Colonic mucosa (tissue), 4 donors: ENCODE measurements at regions of chr9 and their contacts with region 1.

Region 1: GRCh38 chr9:4366591-4367330 is 66.9 kb upstream of the GLIS3 start:
- DNase-seq: peak; percentile 26
- H3K4me3 ChIP-seq: no peak overlapping the region
- H3K27ac ChIP-seq: no peak overlapping the region
- H3K4me1 ChIP-seq: no peaks in the 10 kb centered on the region
- H3K27me3 ChIP-seq: no peaks in the 10 kb centered on the region
- CTCF ChIP-seq: peak; percentile 50

Region 2: GRCh38 chr9:4293293-4293931 is 73.3 kb before region 1 on chr9:
- intact Hi-C with region 1: no loop called
- DNase-seq: no peak
- H3K4me3 ChIP-seq: no peak overlapping the region
- H3K27ac ChIP-seq: no peak overlapping the region
- H3K4me1 ChIP-seq: peaks cover 8% of the 10 kb centered on the region
- H3K27me3 ChIP-seq: no peaks in the 10 kb centered on the region
- CTCF ChIP-seq: no peak

Region 3: GRCh38 chr9:4315582-4316215 is 51.1 kb before region 1 on chr9:
- intact Hi-C with region 1: loop called (anchors 5 kb)
- DNase-seq: peak; percentile 79
- H3K4me3 ChIP-seq: no peak overlapping the region
- H3K27ac ChIP-seq: no peak overlapping the region
- H3K4me1 ChIP-seq: no peaks in the 10 kb centered on the region
- H3K27me3 ChIP-seq: no peaks in the 10 kb centered on the region
- CTCF ChIP-seq: peak; percentile 80